ENCODE measurements at regions of chr11 and their contacts with region 1.

Region 1: GRCh38 chr11:2420502-2421225 is 20.1 kb downstream of the TSSC4 start:
- DNase-seq: peak; percentile 79
- H3K4me3 Mint-ChIP-seq: no peak overlapping the region
- H3K27ac Mint-ChIP-seq: no peak overlapping the region
- H3K4me1 Mint-ChIP-seq: peaks cover 2% of the 10 kb centered on the region
- H3K27me3 Mint-ChIP-seq: no peaks in the 10 kb centered on the region

Region 2: GRCh38 chr11:2166091-2166851 is 254.4 kb before region 1 on chr11:
- CTCF ChIA-PET with region 1: interaction called, 41 read pairs
- POLR2A ChIA-PET with region 1: interaction called, 3 read pairs
- intact Hi-C with region 1: loop called (anchors 1 kb)
- DNase-seq: peak; percentile 56
- H3K4me3 Mint-ChIP-seq: no peak overlapping the region
- H3K27ac Mint-ChIP-seq: no peak overlapping the region
- H3K4me1 Mint-ChIP-seq: no peaks in the 10 kb centered on the region
- H3K27me3 Mint-ChIP-seq: peaks cover 7% of the 10 kb centered on the region

Region 3: DNA sequence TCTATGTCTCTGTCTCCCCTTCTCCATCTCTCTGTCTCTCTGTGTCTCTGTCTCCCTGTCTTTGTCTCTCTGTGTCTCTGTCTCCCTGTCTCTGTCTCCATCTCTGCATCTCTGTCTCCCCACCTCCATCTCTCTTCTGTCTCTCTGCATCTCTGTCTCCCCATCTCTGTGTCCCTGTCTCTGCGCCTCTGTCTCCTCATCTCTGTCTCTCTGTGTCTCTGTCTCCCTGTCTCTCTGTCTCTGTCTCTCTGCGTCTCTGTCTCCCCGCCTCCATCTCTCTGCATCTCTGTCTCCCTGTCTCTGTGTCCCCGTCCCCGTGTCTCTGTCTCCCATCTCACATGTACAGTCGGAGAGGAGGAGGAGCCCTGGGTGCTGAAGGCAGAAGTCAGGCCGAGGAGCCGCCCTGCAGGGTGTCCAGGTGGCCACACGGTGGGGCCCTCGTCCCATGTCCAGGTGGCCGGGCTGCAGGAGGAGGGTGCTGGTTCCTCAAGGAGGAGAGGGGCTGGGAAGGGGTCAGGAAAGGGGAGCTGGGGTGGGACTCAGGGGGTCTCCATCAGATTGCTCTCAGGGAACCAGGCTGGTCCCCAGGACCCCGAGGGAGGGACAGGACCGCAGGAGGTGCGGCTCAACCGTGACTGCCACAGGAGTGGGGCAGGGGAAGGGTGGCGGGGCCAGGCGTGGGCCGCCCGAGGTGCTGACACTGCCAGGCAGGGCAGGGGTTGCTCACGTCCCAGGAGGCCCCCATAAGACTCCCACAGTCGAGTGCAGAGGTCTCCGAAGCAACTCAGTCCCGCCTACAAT is 223.5 kb before region 1 on chr11:
- CTCF ChIA-PET with region 1: interaction called, 46 read pairs
- POLR2A ChIA-PET with region 1: no interaction called
- intact Hi-C with region 1: loop called (anchors 1 kb)
- DNase-seq: peak; percentile 83
- H3K4me3 Mint-ChIP-seq: no peak overlapping the region
- H3K27ac Mint-ChIP-seq: no peak overlapping the region
- H3K4me1 Mint-ChIP-seq: peaks cover 2% of the 10 kb centered on the region
- H3K27me3 Mint-ChIP-seq: no peaks in the 10 kb centered on the region

Region 4: DNA sequence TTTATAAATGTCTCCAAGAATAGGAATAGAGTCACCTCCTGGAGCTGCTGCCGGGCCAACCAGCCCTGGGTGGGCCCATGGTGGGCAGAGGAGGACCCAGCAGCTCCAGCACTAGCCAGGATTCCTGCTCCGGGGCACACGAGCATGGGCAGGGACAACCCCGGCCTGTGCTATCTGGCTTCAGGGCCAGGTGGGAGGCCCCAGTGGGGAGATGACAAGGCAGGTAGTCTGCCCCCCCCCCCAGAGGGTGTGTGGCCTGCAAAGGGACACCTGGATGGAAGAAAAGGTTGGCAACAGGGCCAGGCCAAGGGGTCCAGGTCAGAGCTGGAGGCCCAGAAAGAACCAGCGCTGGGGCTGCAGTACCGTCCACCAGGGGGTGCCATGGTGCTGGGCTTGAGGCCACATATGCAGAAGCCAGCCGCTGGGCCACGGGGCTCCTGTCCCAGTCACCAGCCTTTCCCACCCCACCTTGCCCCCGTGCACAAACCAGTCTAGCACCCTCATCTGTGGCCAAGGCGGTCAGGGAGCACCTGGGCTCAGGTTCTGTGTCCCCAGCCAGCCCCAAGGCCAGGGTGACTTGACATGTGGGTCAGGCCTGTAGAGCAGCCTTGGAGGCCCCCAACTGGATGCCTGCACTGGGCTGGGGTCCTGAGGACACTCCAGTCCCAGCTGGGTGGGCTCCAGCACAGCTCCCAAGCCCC is 115.4 kb before region 1 on chr11:
- CTCF ChIA-PET with region 1: interaction called, 340 read pairs
- POLR2A ChIA-PET with region 1: interaction called, 4 read pairs
- intact Hi-C with region 1: loop called (anchors 1 kb)
- DNase-seq: peak; percentile 88
- H3K4me3 Mint-ChIP-seq: no peak overlapping the region
- H3K27ac Mint-ChIP-seq: no peak overlapping the region
- H3K4me1 Mint-ChIP-seq: peaks cover 42% of the 10 kb centered on the region
- H3K27me3 Mint-ChIP-seq: no peaks in the 10 kb centered on the region

Region 5: DNA sequence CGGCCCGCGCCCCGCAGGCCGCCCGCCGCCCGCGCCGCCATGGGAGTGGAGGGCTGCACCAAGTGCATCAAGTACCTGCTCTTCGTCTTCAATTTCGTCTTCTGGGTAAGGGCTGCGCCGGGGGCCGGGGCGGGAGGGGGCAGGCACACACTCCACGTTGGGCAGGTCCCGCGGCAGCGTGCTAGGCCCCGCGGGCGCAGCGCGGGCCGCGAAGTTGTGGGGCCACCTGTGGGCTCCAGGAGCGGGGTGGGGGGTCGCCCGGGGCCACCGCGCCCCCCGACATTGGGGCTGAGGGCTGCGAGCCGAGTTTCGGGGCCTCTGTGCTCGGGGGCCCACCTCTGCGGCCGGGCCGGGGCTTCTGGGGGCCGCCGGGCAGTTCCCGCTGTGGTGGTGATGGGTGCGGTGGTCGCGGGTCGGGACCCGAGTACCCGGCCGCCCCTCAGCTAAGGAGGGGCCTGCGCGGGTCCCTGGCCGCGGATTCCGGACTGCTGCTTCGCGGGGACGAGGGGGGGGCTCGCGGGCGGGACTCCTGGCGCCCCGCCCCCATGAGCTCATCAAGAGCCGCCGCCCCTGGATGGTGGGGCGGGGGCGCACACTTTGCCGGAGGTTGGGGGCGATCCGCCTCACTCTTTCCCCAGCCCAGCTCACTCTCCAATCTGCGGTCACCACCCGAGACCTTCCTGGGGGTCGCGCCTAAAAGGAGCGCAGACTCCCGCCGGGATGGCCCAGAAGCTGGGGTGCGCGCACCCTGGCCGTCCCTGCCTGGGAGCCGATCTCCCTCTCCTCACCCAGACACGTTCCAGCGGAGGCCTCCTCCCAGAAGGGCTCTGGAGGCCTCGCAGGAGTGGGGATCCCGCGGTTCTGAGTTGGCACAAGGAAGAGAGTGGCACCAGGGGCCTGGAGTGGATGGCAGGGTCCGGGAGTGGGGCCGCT is 42.9 kb before region 1 on chr11:
- CTCF ChIA-PET with region 1: interaction called, 18 read pairs
- POLR2A ChIA-PET with region 1: no interaction called
- intact Hi-C with region 1: no loop called
- DNase-seq: peak; percentile 69
- H3K4me3 Mint-ChIP-seq: peak overlapping the region; percentile 89
- H3K27ac Mint-ChIP-seq: peak overlapping the region; percentile 84
- H3K4me1 Mint-ChIP-seq: peaks cover 24% of the 10 kb centered on the region
- H3K27me3 Mint-ChIP-seq: no peaks in the 10 kb centered on the region

Region 6: GRCh38 chr11:2409611-2410468 is 10.8 kb before region 1 on chr11:
- CTCF ChIA-PET with region 1: interaction called, 12 read pairs
- POLR2A ChIA-PET with region 1: no interaction called
- intact Hi-C with region 1: no loop called
- DNase-seq: no peak
- H3K4me3 Mint-ChIP-seq: no peak overlapping the region
- H3K27ac Mint-ChIP-seq: no peak overlapping the region
- H3K4me1 Mint-ChIP-seq: no peaks in the 10 kb centered on the region
- H3K27me3 Mint-ChIP-seq: no peaks in the 10 kb centered on the region

Region 7: DNA sequence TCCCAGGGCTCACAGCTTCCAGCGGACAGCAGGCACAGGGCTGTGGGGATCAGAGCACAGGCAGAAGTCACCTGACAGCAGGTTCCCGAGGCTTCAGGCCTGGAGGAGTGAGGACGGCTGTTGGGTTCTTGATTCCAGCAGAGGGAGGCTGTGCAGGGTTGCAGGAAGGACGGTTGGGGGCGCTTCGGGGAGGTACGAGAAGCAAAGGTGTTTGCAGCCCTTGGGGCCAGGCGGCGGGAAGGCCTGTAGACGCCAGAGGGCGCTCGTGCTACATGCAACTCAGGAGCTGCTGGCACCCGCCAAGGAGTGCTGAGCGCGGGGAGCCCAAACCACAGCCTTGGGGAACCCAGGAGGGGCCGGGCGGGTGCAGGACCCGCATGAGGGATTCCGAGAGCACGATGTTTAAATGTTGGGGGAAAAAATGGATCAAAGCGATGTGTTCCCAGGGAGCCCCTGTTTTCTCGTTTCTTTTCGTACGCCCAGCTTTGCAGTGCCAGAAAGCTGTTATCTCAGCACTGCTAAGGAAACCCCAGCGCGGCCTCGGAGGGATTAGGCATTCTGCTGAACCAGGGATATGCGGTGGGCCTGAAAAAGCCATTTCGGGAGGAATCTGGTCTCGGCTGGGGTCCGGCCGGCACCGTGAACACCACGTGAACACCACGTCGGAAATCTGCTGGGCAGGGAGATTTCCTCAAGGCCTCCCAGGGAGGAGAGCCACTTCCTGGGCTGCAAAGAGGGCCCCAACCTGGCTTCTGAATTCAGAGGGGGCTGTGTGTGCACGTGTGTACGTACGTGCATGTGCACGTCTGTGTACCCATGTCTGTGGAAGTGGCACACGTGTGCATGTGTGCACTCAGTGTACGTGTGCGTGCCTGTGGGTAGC is 112.3 kb after region 1 on chr11:
- CTCF ChIA-PET with region 1: interaction called, 121 read pairs
- POLR2A ChIA-PET with region 1: no interaction called
- intact Hi-C with region 1: no loop called
- DNase-seq: peak; percentile 94
- H3K4me3 Mint-ChIP-seq: peak overlapping the region; percentile 54
- H3K27ac Mint-ChIP-seq: no peak overlapping the region
- H3K4me1 Mint-ChIP-seq: peaks cover 10% of the 10 kb centered on the region
- H3K27me3 Mint-ChIP-seq: no peaks in the 10 kb centered on the region

Measured in activated CD4-positive, alpha-beta memory T cell treated with anti-CD3 and anti-CD28 coated beads for 36 hours (primary cell).